AG04449 (cell line): ENCODE measurements at regions of chr3 and their contacts with region 1.

Region 1: GRCh38 chr3:126752303-126752842 is 48.3 kb downstream of the CHCHD6 start:
- DNase-seq: peak; percentile 14
- H3K4me3 ChIP-seq: no peak overlapping the region
- CTCF ChIP-seq: peak; percentile 96

Region 2: GRCh38 chr3:126357295-126358037 is 394.9 kb before region 1 on chr3 and contains the start of gene KLF15:
- CTCF ChIA-PET with region 1: no interaction called
- POLR2A ChIA-PET with region 1: no interaction called
- DNase-seq: no peak
- H3K4me3 ChIP-seq: peak within 1 kb of the TSS; percentile 67
- CTCF ChIP-seq: no peak

Region 3: DNA sequence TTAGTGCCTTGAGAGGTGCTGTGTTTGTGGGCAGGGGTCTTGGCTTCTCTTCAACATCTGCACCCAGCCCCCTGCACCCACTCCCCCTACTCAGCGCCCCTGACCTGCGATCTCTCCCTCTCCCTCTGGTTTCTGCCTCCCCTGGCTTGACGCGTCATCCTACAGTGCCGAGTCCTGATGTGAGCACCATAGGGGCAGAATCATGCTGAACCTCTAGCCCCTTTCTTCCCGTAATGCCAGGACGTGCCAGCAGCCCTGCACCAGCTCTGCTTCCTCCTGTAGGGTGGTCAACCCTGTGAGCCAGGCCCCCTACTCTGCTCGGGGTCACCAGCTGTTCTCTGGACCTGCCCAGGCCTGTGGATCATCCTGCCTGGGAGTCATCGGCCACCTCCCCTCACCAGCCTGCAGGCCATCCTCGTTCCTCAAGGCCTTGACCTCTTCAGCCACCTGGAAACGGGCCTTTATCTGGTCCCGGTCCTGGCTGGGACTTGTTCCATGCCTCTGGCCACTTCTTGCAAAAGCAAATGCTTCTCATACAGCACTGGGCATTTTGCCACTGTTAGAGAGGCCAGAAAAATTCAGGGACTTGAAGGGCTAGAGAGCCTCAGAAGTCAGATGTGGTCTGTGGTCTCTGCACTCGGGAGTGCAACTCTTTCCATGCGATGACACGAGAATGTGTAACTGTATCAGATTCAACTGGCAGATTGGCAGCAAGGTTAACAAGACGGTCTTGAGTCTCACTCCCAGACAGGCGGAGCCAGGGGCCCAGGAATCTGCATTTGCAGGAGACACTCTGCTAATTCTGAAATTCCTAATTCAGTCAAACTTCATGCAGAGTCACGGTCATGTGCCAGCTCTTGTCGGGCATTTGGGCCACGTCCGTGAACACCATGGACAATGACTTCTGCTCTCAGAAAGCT is 378.4 kb before region 1 on chr3:
- CTCF ChIA-PET with region 1: no interaction called
- POLR2A ChIA-PET with region 1: no interaction called
- DNase-seq: peak; percentile 37
- H3K4me3 ChIP-seq: no peak overlapping the region
- CTCF ChIP-seq: no peak

Region 4: GRCh38 chr3:126737531-126737930 is 14.8 kb before region 1 on chr3:
- CTCF ChIA-PET with region 1: interaction called, 59 read pairs
- POLR2A ChIA-PET with region 1: no interaction called
- DNase-seq: no peak
- H3K4me3 ChIP-seq: no peak overlapping the region
- CTCF ChIP-seq: no peak

Region 5: GRCh38 chr3:126777366-126777765 is 25.0 kb after region 1 on chr3:
- CTCF ChIA-PET with region 1: interaction called, 19 read pairs
- POLR2A ChIA-PET with region 1: interaction called, 7 read pairs
- DNase-seq: no peak
- H3K4me3 ChIP-seq: no peak overlapping the region
- CTCF ChIP-seq: no peak

Region 6: DNA sequence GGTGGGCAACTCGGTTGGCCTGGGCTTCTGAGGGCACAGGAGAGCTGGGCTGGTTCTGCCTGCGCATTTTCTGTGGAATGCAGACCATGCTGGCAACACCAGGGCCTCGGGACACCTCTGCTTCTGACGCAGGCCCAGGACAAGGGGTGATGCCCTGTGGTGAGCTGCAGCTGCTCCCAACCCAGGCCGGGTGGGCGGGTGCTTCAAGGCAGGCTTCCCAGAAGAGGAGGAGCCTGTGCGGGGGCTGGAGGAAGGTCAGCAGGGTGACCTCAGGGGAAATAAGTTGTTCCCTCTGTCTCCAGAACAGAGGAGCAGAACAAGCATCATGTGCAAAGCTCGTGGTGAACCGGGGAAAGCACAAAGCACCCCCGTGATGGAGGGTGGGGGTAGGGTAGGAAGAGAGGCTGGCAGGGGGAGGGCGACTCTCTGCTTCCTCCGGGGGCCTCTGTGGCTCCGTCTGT is 219.5 kb after region 1 on chr3:
- CTCF ChIA-PET with region 1: interaction called, 20 read pairs
- POLR2A ChIA-PET with region 1: interaction called, 3 read pairs
- DNase-seq: no peak
- H3K4me3 ChIP-seq: no peak overlapping the region
- CTCF ChIP-seq: no peak

Region 7: DNA sequence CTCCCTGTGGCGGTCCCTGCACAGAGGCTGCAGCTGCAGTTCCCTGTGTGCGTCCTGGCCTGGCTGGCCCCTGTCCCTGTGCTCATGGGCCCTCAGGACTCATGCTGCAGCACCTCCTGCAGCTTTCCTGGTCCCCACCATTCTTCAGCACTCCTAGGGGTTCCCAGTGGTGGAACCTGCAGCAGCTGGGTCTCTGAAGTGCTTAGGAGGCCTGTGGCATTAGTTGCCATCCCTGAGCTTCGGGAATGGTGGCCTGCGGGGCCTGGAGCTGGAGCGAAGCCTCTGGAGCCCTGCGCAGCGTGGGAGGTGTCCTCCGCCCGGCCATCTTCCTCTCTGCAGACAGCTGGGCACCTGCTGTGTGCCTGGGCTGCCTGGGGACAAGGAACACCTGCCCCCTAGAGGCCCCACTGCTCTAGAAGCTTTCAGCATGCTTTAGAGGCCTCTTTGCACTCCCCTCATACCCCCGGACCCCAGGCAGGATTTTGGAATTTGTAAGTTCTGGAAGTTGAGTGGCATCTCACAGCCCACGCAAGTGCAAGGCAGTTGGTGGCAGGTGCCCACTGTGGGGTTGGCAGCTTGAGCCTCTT is 243.6 kb after region 1 on chr3:
- CTCF ChIA-PET with region 1: interaction called, 60 read pairs
- POLR2A ChIA-PET with region 1: interaction called, 3 read pairs
- DNase-seq: no peak
- H3K4me3 ChIP-seq: no peak overlapping the region
- CTCF ChIP-seq: peak; percentile 7

Region 8: DNA sequence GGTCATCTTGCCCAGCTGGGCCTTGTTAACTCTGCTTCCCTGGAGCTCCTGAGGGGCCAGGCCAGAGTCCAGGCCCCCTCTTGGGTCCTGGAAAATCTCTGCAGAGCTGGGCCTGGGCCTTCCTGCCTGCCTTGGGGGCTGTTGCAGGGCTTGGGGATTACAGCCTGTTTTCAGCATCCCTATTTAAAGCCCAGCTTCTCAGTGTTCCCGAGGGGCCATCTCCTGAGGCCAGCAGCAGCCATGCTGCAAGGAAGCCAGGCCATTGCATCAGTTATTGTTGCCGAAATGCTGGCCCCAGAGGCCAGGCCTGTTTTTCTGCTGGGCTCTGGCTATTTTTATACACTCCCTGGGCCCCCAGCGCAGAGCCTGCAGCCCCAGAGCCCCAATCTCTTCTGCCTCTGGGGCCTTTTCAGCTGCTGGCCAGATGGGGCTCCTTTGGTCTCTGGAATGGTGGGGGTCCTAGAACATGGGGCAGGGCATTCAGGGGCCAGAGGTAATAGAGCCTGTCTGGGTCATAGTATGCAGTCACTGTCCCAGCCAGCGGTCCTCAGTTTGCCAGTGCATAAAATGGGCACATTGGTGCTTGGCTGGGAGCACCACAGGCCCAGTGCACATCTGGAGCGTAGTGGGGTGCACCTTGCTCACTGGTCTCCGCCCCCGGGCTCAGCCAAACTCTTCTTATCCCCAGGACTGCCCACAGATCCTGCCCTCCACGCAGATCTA is 259.1 kb after region 1 on chr3:
- CTCF ChIA-PET with region 1: interaction called, 60 read pairs
- POLR2A ChIA-PET with region 1: no interaction called
- DNase-seq: no peak
- H3K4me3 ChIP-seq: no peak overlapping the region
- CTCF ChIP-seq: no peak

Region 9: GRCh38 chr3:127455541-127456450 is 703.4 kb after region 1 on chr3:
- CTCF ChIA-PET with region 1: interaction called, 38 read pairs
- POLR2A ChIA-PET with region 1: no interaction called
- DNase-seq: no peak
- H3K4me3 ChIP-seq: peak overlapping the region; percentile 44
- CTCF ChIP-seq: peak; percentile 92